Activated CD4-positive, alpha-beta T cell treated with anti-CD3 and anti-CD28 coated beads, Interleukin-2, amount 10 ng/mL, durations not matched to agents 24 days and 14 days (primary cell): ENCODE measurements at regions of chr2 and their contacts with region 1.

Region 1: DNA sequence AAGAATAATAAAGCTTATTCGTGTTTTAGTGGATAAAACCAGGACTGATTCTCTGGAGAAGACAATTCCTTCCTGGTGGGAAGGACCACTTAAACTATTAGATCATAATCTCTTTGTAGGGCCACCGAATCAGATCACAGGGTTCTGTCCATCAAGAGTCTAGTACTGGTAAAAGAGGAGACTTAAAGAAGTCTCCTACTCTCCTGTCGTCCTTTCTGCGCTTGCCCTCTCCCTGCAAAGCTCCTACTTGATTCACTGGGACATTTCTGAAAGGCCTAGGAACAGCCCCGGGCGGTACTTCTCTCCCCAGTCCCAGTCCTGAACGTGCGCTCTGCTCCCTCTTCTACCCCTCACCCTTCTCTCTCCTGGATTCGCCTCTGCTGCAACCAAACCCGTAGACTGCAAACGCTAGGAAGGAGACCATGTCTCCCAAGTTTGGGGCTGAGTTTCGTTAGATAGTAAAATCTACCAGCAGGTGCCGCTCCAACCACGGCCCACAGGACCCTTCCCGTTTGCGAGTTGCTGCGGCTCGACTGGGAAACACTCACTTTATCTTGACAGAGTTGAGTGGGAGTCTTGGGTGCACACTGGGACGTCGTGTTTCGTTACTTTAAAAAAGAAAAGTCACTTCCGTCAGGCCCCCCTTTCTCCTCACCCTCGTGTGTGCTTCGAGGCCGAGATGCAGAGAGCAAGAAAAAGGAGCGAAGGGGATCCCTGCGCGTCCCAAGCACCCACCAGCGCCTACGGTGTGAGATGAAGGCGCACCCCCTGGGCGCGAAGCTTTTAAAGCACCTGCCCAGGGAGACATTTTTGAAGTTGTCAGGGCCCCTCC is 923 bp downstream of the FIGLA start:
- DNase-seq: peak; percentile 90
- H3K4me3 Mint-ChIP-seq: peak overlapping the region; percentile 80
- H3K27ac Mint-ChIP-seq: no peak overlapping the region
- H3K4me1 Mint-ChIP-seq: peaks cover 7% of the 10 kb centered on the region
- H3K27me3 Mint-ChIP-seq: peaks cover 60% of the 10 kb centered on the region

Region 2: GRCh38 chr2:70656421-70657010 is 133.0 kb before region 1 on chr2:
- intact Hi-C with region 1: loop called (anchors 1 kb)
- DNase-seq: no peak
- H3K4me3 Mint-ChIP-seq: no peak overlapping the region
- H3K27ac Mint-ChIP-seq: no peak overlapping the region
- H3K4me1 Mint-ChIP-seq: peaks cover 9% of the 10 kb centered on the region
- H3K27me3 Mint-ChIP-seq: peaks cover 27% of the 10 kb centered on the region

Region 3: DNA sequence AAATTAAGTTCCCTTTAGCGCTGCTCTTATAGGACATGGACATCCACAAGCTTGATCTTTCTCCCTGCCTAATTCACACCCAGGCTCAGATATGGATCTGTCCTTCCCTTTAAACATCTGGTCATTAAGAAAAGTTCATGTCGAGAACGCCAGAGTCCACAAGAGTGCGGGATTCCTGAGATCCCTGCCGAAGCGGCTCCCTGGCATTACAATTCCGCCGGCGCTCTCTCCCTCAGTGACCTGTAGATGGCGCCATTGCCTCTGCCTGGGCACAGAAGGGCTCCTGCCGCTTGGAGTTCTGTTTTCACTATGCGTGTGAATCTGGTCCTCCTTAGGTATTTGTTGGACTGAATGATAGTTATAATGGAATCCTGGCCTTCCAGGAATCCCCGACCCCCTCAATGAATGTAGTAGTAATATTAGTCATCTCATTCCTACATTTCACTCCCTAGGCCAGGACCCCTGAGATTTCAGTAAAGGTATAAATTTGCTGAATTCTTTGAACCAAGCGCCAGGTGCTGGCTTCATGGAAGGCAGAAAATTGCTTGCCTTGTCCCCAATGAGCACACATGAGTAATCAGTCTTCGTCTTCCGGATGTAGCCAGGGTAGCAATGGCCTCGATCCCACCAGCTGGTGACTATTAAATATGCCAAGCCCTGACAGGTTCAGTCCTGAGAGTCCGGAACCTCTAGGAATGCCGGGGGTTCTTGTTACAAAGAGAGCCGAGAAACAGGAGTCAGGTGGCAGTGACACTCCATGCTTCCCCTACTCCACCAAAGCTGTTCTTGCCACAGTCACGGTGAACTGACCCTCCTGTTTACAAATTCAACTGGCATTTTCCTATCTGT is 72.5 kb after region 1 on chr2:
- intact Hi-C with region 1: loop called (anchors 5 kb)
- DNase-seq: peak; percentile 92
- H3K4me3 Mint-ChIP-seq: peak overlapping the region; percentile 12
- H3K27ac Mint-ChIP-seq: no peak overlapping the region
- H3K4me1 Mint-ChIP-seq: peaks cover 9% of the 10 kb centered on the region
- H3K27me3 Mint-ChIP-seq: peaks cover 57% of the 10 kb centered on the region

Region 4: GRCh38 chr2:70907130-70908057 is 117.9 kb after region 1 on chr2:
- intact Hi-C with region 1: loop called (anchors 5 kb)
- DNase-seq: no peak
- H3K4me3 Mint-ChIP-seq: peak overlapping the region; percentile 49
- H3K27ac Mint-ChIP-seq: no peak overlapping the region
- H3K4me1 Mint-ChIP-seq: peaks cover 4% of the 10 kb centered on the region
- H3K27me3 Mint-ChIP-seq: peaks cover 77% of the 10 kb centered on the region

Region 5: GRCh38 chr2:70919672-70920366 is 130.3 kb after region 1 on chr2:
- intact Hi-C with region 1: loop called (anchors 2 kb)
- DNase-seq: peak; percentile 93
- H3K4me3 Mint-ChIP-seq: no peak overlapping the region
- H3K27ac Mint-ChIP-seq: no peak overlapping the region
- H3K4me1 Mint-ChIP-seq: peaks cover 2% of the 10 kb centered on the region
- H3K27me3 Mint-ChIP-seq: peaks cover 28% of the 10 kb centered on the region

Region 6: DNA sequence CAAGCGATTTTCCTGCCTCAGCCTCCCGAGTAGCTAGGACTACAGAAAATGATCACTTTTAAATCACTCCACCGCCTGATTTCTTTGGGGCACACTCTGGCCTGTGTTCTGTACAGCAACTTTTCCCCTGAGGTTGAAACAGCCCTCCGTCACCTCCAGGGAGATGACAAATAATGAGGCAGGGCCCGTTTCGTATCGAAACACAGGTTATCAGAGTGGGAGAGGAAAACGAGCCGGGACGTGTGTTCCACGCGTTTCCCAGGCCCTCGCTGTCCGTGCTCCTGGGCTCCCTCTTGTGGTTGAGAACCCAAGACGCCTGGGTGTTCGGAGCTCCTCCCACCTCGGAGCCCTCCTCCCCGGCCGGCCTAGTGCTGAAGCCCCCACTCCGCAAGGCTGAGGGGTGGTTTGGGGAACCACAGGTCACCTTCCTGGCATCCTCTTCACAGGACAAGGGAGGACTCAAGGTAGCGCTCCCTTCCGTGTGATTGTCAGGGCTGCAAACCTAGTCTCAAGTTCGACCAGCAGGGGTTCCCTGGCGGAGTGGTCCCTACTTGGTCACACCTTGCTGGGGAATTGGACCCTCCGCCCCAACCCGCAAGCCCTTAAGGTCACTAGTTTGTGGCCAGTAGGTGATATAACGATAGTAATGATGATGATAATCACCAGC is 158.9 kb after region 1 on chr2:
- intact Hi-C with region 1: loop called (anchors 1 kb)
- DNase-seq: peak; percentile 93
- H3K4me3 Mint-ChIP-seq: peak overlapping the region; percentile 83
- H3K27ac Mint-ChIP-seq: peak overlapping the region; percentile 58
- H3K4me1 Mint-ChIP-seq: peaks cover 16% of the 10 kb centered on the region
- H3K27me3 Mint-ChIP-seq: peaks cover 23% of the 10 kb centered on the region

Region 7: DNA sequence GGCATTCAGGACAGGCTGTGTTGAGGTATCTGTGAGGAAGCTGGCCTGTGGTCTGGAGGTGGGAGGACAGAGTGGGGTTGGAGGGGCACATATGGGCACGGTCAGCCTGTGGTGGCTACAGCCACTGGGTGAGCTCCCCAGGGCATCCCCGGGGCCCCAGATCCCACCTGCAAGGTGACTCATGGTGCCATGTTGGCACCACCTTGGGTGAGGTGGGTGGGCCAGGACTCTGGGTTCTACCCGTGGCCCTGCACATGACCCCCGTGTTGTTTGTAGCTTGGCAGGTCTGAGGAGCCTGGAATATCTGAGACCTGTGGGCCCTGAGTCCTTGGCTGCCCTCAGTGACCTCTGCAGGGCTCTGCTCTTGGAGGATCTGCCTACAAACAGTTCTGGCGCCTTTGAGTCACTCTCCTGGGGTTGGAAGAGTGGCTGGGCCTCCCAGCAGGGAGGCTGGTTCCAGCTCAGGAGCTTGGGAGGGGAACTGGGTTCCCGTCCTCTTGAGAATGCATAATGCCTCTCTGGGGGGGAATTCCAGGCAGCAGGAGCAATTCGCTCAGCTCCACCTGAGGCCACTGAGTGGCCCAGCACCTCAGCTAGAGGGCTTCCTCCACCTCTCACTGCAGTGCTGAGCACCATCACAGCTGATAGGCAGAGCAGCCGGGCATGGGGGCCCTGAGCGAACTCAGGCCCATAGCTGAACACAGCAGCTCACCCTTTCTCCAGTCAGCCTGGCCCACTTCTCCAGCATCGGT is 769.0 kb after region 1 on chr2:
- intact Hi-C with region 1: no loop called
- DNase-seq: no peak
- H3K4me3 Mint-ChIP-seq: no peak overlapping the region
- H3K27ac Mint-ChIP-seq: no peak overlapping the region
- H3K4me1 Mint-ChIP-seq: no peaks in the 10 kb centered on the region
- H3K27me3 Mint-ChIP-seq: no peaks in the 10 kb centered on the region